Dendritic cell treated with granulocyte-macrophage colony-stimulating factor and Interleukin-4, amounts not matched to agents 40 ng/mL and 50 ng/mL, for 4 days (primary cell): ENCODE measurements at regions of chr7 and their contacts with region 1.

Region 1: DNA sequence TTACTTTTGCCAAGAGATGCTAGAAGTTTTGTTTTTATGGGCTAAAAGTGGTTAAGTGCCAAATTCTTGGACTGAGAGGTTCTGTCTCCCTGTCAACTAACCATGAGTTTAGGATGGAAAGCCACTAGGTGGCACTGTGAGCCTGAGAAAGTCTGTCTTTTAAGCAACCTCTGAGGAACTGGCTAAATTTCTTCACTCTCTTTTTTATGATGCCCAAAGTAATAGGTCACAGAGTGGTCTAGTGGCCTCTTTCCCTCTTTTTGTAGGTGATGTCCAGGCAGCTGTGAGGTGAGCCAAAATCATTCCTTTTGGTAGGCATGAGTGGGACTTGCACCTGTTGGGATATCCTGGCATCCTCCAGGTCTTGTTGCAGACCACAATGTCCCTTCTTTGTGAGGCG is 56.8 kb downstream of the SND1 start:
- H3K4me3 Mint-ChIP-seq: no peak overlapping the region
- H3K27ac Mint-ChIP-seq: no peak overlapping the region
- H3K4me1 Mint-ChIP-seq: no peaks in the 10 kb centered on the region
- H3K27me3 Mint-ChIP-seq: no peaks in the 10 kb centered on the region

Region 2: DNA sequence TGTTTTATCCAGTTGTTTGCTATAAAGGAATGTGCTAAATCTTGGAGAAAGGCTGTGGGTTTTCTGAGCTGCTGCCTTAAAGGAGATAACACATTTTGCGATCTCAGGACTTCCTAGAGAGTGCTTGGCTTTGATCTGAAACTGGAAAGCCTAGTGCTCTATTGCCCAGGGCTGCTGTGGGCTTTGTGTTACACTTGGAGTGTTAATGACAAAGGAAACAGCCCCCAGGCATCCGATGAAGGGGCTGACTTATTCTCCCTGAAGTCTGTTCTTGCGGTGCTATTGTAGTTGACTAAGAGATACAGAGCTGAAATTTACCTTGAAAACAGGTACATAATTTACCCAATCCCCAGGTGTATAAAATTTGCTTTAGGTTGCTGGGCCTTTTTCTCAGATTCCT is 17.7 kb after region 1 on chr7:
- intact Hi-C with region 1: no loop called
- H3K4me3 Mint-ChIP-seq: no peak overlapping the region
- H3K27ac Mint-ChIP-seq: no peak overlapping the region
- H3K4me1 Mint-ChIP-seq: peaks cover 3% of the 10 kb centered on the region
- H3K27me3 Mint-ChIP-seq: no peaks in the 10 kb centered on the region

Region 3: GRCh38 chr7:127844707-127845331 is 136.0 kb after region 1 on chr7:
- intact Hi-C with region 1: no loop called
- H3K4me3 Mint-ChIP-seq: no peak overlapping the region
- H3K27ac Mint-ChIP-seq: no peak overlapping the region
- H3K4me1 Mint-ChIP-seq: peaks cover 22% of the 10 kb centered on the region
- H3K27me3 Mint-ChIP-seq: no peaks in the 10 kb centered on the region

Region 4: DNA sequence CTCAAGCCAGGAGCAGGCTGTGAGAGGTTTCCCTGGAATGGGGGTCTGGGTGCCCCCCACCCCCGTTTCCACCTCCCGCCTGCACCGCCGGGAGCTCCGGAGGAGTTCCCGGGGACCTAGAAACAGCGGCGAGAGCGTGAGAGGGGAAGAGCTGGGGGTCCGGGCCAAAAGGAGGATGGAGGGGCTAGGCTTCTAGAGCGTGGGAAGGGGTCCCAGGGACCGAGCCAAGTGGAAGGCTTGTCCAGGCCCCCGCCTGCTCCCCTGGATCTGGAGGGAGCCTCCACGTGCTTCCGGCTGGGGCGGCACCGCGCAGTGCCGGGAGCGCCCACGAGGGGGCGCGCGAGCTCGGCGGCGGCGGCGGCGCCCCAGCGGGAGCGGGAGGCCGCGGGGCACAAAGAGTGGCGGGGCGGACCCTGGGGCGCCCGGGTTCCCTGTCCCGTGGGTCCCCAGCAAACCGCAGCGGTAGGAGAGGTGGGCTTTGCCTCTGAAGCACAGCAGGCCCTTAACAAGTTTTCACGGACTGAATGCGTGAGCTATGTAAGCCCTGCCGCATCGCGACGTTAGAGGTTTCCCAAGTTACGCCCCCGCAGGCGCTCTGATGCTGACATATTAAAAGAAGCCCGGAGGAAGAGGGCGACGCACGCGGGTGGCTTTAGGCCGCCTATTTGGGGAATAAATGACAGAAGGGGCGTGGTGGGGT is 426.9 kb after region 1 on chr7:
- intact Hi-C with region 1: loop called (anchors 5 kb)
- H3K4me3 Mint-ChIP-seq: peak overlapping the region; percentile 73
- H3K27ac Mint-ChIP-seq: no peak overlapping the region
- H3K4me1 Mint-ChIP-seq: peaks cover 39% of the 10 kb centered on the region
- H3K27me3 Mint-ChIP-seq: peaks cover 61% of the 10 kb centered on the region

Region 5: GRCh38 chr7:128209229-128210035 is 500.6 kb after region 1 on chr7:
- intact Hi-C with region 1: loop called (anchors 1 kb)
- H3K4me3 Mint-ChIP-seq: no peak overlapping the region
- H3K27ac Mint-ChIP-seq: peak overlapping the region; percentile 18
- H3K4me1 Mint-ChIP-seq: peaks cover 9% of the 10 kb centered on the region
- H3K27me3 Mint-ChIP-seq: peaks cover 26% of the 10 kb centered on the region

Region 6: GRCh38 chr7:128322040-128322643 is 613.4 kb after region 1 on chr7:
- intact Hi-C with region 1: loop called (anchors 5 kb)
- H3K4me3 Mint-ChIP-seq: no peak overlapping the region
- H3K27ac Mint-ChIP-seq: no peak overlapping the region
- H3K4me1 Mint-ChIP-seq: no peaks in the 10 kb centered on the region
- H3K27me3 Mint-ChIP-seq: no peaks in the 10 kb centered on the region